ENCODE measurements at regions of chr2 and their contacts with region 1.

Region 1: DNA sequence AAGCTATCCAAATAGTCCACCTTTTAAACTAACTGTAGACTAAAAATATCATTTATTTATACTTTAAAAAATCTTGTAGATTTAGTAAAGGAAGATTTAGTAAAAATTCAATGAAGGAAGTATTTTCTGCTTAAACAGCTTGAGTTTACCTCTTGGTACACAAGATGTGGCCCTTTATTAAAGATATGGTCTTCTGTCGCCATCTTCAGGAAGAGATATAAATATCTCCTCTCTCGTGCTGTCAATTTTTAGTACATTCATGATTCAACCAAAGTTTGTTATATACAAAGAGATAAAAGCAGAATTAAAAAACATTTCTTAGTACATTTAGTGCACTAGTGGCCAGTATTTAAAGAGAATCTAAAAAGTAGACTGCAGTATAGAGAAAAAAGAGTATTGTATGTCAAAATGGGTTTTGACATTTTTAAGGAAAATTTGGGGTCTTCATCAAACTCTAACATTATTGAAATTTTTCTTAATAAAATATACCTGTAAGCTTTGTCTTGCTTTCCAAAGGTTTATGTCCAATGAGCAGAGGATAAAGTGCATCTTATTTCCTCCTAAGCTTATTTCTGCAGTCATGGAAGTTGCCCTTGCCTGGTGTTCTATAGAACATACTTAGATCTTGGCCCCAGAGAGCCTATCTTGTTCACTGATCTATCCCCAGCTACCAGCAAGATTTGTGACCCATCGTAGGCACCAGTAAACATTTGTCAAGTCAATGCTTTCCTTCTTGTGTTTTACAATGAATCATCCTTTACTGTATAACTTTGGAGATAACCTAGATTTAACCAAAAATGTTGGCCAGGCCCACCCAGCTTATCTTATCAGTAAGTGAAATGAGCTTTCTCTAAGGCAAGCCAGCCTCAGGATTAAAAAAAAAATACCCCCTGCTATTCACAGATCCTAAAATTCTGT is 18.5 kb upstream of the EML6 start:
- DNase-seq: no peak
- H3K4me3 ChIP-seq: no peak overlapping the region
- CTCF ChIP-seq: no peak
- POLR2A ChIP-seq: no peak

Region 2: DNA sequence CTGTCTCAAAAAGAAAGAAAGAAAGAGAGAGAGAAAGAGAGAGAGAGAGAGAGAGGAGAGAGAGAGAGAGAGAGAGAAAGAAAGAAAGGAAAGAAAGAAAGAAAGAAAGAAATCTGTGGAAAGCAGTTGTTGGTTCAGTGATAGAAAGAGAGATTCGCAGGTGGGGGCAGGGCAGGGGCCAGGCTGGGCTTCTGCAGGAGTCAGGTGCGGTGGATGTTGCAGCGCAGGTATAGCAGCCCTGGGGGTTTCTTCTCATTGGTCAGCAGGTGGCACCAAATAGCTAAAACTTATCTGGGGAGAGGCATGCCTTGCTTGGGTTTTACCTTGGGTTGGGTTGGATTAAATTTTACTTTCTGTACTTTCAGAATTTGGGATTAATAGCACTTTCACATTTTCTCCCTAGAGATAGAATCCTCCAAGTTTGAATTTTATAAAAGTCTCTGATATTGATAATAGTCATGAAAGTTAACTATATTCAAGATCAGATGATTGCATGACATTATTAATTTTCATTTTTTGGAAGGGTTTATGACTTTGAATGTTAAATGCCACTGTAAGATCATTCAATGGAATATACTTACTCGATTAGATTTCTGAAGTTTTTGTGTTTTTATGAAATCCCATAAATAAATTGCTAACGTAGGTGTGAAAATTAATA is 182.2 kb before region 1 on chr2:
- intact Hi-C with region 1: loop called (anchors 10 kb)
- DNase-seq: no peak
- H3K4me3 ChIP-seq: no peak overlapping the region
- CTCF ChIP-seq: no peak
- POLR2A ChIP-seq: no peak

Region 3: DNA sequence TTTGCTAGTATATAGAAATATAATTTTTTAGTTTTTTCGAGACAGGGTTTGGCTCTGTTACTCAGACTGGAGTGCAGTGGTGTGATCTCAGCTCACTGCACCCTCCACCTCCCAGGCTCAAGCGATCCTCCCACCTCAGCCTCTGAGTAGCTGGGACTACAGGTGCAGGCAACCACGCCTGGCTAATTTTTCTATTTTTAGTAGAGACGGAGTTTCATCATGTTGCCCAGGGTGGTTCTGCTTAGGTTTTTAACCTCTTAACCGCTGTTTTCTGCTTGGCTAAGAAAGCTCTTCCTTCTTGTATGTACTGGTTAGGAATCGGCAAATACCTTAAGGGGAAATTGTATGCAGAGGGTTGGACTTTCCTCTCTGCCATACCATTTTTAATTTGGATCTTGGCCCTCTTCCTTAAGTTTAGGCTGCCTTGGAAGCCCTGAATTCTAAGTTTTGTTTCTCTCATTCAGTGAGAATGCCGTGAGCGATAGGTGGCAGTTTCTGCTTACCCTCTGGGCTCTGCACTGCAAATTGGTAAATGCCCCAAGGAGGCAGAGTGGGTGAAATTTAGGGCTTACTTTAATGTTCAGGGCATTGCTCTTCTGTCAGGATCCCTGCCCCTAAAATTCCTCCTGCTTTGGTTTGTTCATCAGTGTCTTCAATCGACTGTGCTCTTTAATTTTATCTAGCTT is 50.8 kb after region 1 on chr2:
- intact Hi-C with region 1: no loop called
- DNase-seq: no peak
- H3K4me3 ChIP-seq: no peak overlapping the region
- CTCF ChIP-seq: no peak
- POLR2A ChIP-seq: no peak

Region 4: GRCh38 chr2:55327470-55328230 is 622.7 kb after region 1 on chr2:
- intact Hi-C with region 1: no loop called
- DNase-seq: no peak
- H3K4me3 ChIP-seq: no peak overlapping the region
- CTCF ChIP-seq: no peak
- POLR2A ChIP-seq: no peak

Measured in lower leg skin (tissue), 4 donors.